AG04449 (cell line): ENCODE measurements at regions of chr5 and their contacts with region 1.

Region 1: DNA sequence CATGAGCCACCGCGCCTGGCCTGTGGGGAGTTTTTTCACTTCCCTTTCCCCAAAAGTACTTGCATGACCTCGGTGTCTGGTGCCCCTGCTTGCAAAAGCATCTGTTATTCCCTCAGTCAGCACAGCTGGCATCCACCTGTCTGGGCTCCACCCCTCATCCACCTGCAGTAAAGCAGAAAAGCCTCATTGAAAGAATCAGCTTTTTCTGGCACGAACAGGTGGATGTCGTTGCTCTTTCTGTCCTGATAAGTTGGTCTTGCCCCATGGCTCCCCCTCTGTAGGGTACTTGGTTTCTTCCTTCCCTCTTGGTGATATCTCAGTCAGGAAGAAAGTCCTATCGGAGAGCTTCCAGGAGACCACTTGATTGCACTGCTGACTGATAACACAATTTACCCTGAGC is 37.4 kb downstream of the WWC1 start:
- DNase-seq: no peak
- H3K4me3 ChIP-seq: no peak overlapping the region
- CTCF ChIP-seq: no peak

Region 2: DNA sequence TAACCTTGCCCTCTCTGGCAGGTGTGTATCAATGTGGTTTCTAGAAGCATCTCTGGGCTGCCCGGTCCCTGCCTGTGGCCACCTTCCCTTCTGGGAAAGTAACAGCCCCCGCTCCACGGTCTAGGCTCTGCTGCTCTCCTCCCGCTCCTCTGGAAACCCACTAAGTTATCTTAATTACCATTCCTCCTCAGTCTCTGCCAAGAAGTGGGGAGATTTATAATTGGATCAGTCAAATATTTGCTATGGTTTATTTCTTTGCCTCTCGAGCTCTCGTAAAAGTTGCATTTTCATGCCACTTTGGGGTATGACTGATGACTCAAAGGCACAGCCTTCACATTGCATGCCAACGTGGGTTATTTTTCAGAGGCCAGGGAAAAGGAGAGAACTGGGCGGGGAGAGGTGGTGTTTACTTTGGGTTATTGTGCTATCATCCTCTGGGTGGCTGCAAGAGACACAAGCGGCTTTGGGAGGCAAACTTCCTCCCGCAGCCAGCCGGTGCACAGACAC is 242.7 kb before region 1 on chr5:
- CTCF ChIA-PET with region 1: no interaction called
- POLR2A ChIA-PET with region 1: no interaction called
- DNase-seq: peak; percentile 75
- H3K4me3 ChIP-seq: no peak overlapping the region
- CTCF ChIP-seq: peak; percentile 23

Region 3: DNA sequence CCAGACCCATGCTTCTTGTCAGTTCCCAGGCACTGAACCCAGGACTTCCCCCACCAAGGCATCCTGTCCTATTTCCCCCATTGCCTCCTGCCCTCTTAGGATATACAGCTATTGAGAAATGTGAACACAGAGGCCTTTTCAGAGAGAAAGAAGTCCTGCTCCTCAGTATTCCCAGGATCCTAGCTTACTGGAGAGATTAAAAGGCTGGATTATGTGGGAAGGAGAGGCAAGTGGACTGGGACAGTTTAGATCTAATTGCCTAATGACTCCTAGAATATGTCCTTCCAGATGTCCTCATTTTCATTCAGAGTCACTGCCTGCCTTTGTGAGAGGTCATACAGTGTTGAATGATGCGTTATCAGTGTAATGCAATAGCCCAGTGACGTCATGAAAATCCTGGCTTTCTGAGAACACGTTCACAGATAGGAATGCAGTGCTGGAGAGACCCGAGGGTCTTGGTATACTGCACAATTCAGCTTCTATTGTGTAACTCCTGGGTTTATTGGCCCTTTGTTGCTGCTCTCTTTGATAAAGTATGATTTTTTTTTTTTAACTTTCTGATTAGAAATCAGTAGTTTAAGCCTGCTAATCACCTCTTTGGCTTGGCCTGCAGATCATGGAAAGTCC is 11.2 kb before region 1 on chr5:
- CTCF ChIA-PET with region 1: interaction called, 12 read pairs
- POLR2A ChIA-PET with region 1: no interaction called
- DNase-seq: peak; percentile 87
- H3K4me3 ChIP-seq: no peak overlapping the region
- CTCF ChIP-seq: no peak